Activated CD4-positive, alpha-beta T cell treated with anti-CD3 and anti-CD28 coated beads for 36 hours (primary cell): ENCODE measurements at regions of chr15 and their contacts with region 1.

Region 1: DNA sequence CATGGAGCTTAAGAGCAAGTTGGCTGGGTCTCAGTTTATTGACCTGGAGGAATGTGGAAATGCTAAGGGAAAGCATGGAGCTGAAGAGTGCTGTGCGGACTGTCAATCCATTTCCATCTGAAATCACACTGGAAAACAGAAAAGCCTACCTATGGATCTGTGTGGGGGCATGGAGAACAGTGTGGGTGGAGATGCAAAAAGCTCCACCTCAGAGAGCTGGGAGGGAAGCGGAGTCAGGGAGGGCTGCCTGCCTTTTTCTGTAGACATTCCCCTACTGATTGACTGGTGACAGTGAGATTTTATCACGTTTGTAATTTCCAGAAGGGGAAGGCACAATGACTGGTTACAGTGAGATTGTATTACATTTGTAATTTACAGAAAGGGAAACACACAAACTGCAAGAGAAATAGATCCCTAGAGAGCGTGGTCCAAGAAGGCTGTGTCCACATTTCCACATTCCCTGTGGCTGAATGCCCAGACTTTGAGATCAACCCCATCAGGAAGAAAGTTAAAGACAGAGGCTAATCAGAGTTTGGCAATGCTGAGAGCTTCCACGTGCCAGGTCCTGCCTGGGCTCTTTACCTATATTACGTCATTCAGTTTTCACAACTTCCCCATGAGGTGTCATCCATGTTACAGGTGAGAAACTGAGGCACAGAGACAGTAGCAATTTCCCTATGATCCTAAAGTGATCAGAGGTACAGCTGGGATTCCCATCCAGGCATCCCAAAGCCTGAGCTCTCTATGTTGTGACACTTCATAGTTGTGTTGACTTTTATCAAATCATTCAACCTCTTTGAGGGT is 67.7 kb upstream of the NSMCE3 start:
- DNase-seq: no peak
- ATAC-seq: no peak
- H3K4me3 Mint-ChIP-seq: no peak overlapping the region
- H3K27ac Mint-ChIP-seq: no peak overlapping the region
- H3K4me1 Mint-ChIP-seq: no peaks in the 10 kb centered on the region
- H3K27me3 Mint-ChIP-seq: no peaks in the 10 kb centered on the region

Region 2: DNA sequence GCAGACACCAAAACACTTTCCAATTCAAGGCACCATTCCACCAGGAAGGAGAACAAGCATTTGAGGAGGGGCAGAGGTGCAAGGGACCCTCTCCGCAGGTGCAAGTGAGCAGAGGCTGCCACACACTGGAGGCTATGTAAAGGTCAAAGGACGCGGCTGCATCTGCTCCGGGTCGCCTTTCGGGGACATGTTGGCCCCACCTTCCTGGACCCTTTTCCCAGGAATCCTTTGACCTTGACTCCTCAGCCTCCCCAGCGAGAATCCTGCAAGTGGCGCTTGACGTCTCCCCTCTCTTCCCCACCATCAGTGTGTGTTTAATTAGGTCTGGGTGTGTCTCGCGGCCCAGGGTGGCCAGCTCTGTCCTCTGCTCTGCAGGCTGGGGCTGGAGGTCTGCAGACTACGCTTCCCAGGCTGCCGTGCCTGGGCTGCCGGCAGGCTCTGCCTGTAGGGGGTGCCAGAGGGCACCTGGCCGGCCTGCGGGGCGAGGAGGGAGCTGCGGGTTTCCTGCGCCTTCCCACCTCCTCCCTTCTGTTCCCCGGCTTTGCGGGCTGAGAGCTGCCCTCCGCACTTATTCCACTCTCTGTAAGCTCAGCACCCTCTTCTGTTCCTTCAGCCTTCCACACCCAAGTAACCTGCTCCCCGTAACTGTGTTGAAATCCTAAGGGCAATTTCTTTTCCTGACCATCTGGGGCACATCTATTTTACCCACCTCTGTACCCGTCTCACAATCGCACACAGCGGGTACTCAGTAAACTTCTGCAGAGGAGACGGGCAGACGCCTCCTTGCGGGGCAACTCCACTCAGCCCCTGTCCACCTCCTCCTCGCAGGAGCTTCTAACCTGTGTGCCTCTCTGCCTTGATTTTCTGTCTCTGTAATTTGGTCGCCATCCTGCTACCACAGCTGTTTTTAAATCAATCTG is 197.6 kb before region 1 on chr15:
- CTCF ChIA-PET with region 1: no interaction called
- POLR2A ChIA-PET with region 1: no interaction called
- intact Hi-C with region 1: loop called in 1 of 2 experiments (anchors 10 kb)
- DNase-seq: peak; percentile 78
- ATAC-seq: peak; percentile 83
- H3K4me3 Mint-ChIP-seq: no peak overlapping the region
- H3K27ac Mint-ChIP-seq: no peak overlapping the region
- H3K4me1 Mint-ChIP-seq: peaks cover 2% of the 10 kb centered on the region
- H3K27me3 Mint-ChIP-seq: peaks cover 33% of the 10 kb centered on the region

Region 3: DNA sequence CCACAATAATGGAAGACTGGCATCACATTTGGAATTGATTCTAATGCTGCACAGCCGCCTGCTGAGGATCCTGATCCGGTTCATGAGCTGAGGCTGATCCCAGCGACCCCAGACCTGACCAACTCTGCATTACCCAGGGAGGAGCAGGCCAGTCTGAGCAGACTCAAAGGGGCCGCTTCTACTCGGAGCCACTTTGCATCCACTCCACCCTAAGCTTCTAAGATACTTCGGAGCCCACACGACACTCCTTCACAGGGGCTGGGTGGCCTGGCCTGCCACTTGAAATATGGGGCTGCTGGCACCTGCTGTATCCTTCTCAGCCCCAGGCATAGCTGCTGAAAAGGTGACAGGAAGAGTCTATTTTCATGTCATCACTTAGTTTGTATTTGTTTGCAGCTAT is 34.5 kb before region 1 on chr15:
- CTCF ChIA-PET with region 1: no interaction called
- POLR2A ChIA-PET with region 1: no interaction called
- intact Hi-C with region 1: loop called in 1 of 2 experiments (anchors 5 kb)
- DNase-seq: no peak
- ATAC-seq: no peak
- H3K4me3 Mint-ChIP-seq: no peak overlapping the region
- H3K27ac Mint-ChIP-seq: no peak overlapping the region
- H3K4me1 Mint-ChIP-seq: no peaks in the 10 kb centered on the region
- H3K27me3 Mint-ChIP-seq: peaks cover 6% of the 10 kb centered on the region

Region 4: GRCh38 chr15:29401644-29402043 is 64.3 kb after region 1 on chr15:
- CTCF ChIA-PET with region 1: no interaction called
- POLR2A ChIA-PET with region 1: no interaction called
- intact Hi-C with region 1: no loop called
- DNase-seq: no peak
- ATAC-seq: no peak
- H3K4me3 Mint-ChIP-seq: no peak overlapping the region
- H3K27ac Mint-ChIP-seq: no peak overlapping the region
- H3K4me1 Mint-ChIP-seq: no peaks in the 10 kb centered on the region
- H3K27me3 Mint-ChIP-seq: peaks cover 14% of the 10 kb centered on the region

Region 5: DNA sequence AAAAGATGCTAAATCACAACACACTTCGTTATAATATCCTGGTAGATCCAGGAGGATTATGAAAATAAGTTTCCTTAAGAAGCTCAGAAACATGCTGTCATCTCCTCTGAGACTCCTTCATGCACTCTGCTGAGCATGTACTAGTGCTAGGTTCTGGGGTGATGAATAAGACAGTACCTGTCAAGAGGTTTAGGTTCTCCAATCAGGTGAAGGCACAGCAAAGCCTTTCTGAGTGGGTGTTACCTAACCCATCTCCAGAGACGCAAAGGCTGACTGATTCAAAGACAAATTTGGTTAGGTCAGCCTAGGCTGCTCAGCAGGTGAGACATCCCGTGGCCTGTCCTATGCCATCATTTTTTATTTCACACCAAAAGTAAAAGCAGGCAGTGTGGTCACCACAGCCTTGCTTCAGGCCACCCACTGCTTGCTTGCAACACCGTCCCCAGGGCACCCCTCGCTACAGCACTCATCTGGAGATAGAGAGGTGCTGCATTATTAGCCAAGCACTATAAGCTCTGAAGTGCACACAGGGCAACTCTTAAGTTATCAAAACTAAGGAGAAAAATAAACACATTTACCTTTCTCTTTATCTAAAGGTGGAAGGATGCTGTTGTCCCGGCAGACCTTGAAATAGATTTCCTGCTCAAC is 367.7 kb after region 1 on chr15:
- CTCF ChIA-PET with region 1: no interaction called
- POLR2A ChIA-PET with region 1: no interaction called
- intact Hi-C with region 1: no loop called
- DNase-seq: no peak
- ATAC-seq: no peak
- H3K4me3 Mint-ChIP-seq: no peak overlapping the region
- H3K27ac Mint-ChIP-seq: no peak overlapping the region
- H3K4me1 Mint-ChIP-seq: no peaks in the 10 kb centered on the region
- H3K27me3 Mint-ChIP-seq: peaks cover 10% of the 10 kb centered on the region